ENCODE measurements at regions of chr10 and their contacts with region 1.

Region 1: DNA sequence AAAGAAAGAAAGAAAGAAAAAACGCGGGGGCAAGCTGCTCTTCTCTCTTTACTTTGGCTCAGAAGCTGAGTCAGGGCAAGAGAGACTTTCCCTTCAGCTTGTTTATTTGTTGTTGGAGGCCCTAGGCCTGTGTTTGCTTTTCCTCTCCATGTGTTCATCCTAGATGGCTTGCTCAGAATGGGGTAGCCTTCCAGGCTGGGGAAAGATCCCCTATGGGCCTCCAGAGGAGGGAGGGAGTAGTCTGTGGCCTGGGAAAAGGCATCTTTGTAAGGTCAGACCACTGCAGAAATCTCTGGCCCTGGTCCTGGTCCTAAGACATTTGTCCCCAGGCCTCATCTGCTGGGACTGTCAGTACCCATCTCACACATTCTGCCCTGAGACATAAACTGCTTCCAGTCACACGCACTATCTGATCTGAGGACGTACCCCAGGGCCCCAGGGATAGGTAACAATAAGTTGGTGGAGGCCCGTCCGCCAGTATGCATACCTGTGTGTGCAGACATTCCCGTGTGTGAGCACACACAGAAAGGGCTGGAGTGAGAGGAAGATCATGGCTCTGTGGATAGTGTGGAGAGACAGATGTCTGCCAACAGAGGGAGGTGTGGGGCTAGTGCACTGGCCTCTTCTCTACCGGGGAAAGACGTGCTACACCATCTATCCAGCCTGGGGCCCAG is 4.9 kb upstream of the SCD start:
- DNase-seq: peak; percentile 75
- H3K4me3 ChIP-seq: no peak overlapping the region
- H3K27ac ChIP-seq: no peak overlapping the region
- H3K4me1 ChIP-seq: peaks cover 11% of the 10 kb centered on the region
- H3K27me3 ChIP-seq: no peaks in the 10 kb centered on the region
- CTCF ChIP-seq: peak; percentile 50 to 64 (median 52)
- POLR2A ChIP-seq: no peak

Region 2: GRCh38 chr10:100413173-100413572 is 71.1 kb after region 1 on chr10:
- intact Hi-C with region 1: no loop called
- DNase-seq: no peak
- H3K4me3 ChIP-seq: no peak overlapping the region
- H3K27ac ChIP-seq: no peak overlapping the region
- H3K4me1 ChIP-seq: no peaks in the 10 kb centered on the region
- H3K27me3 ChIP-seq: no peaks in the 10 kb centered on the region
- CTCF ChIP-seq: no peak
- POLR2A ChIP-seq: no peak

Region 3: GRCh38 chr10:100433253-100434240 is 91.5 kb after region 1 on chr10:
- intact Hi-C with region 1: loop called (anchors 5 kb)
- DNase-seq: peak; percentile 99
- H3K4me3 ChIP-seq: peak overlapping the region in 1 of 2 donors; percentile 4
- H3K27ac ChIP-seq: no peak overlapping the region
- H3K4me1 ChIP-seq: no peaks in the 10 kb centered on the region
- H3K27me3 ChIP-seq: no peaks in the 10 kb centered on the region
- CTCF ChIP-seq: peak; percentile 99 to 100 (median 99)
- POLR2A ChIP-seq: no peak